Mammary epithelial cell (primary cell): ENCODE measurements at regions of chr9 and their contacts with region 1.

Region 1: DNA sequence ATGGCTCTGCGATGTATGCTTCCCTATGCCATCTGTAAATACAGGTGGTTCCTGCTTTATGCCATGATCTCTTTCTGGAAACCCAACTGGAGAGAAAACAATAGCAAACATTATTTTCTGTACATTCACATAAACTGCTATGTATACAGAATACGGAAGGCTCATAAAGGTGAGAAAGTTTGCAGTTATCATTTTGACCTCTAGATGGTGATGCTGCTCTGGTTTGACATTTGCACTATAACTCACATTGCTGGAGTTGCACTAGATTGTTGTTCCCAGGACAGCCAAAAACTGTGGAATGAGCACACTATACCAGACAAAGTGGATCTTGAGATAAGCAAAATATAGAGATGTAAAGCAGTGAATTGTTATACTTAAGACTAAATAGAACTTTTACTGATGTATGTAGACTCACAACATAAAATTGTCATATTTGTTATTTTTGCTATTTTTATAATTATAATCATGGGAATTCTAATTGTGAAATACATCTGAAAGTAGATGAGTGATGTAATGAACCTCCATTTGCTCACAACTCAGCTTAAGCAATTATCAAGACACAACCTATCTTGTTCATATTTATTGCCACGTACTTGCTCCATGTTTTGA is 246.5 kb downstream of the PTPRD start:
- DNase-seq: peak; percentile 29
- H3K4me3 ChIP-seq: no peak overlapping the region
- H3K27ac ChIP-seq: no peak overlapping the region
- H3K4me1 ChIP-seq: no peaks in the 10 kb centered on the region
- H3K27me3 ChIP-seq: no peaks in the 10 kb centered on the region
- CTCF ChIP-seq: peak; percentile 82 to 84

Region 2: GRCh38 chr9:10045598-10045997 is 320.7 kb before region 1 on chr9:
- CTCF ChIA-PET with region 1: no interaction called
- dilution Hi-C with region 1: no loop called
- in situ Hi-C with region 1: no loop called
- intact Hi-C with region 1: loop called (anchors 5 kb)
- DNase-seq: peak; percentile 26
- H3K4me3 ChIP-seq: no peak overlapping the region
- H3K27ac ChIP-seq: no peak overlapping the region
- H3K4me1 ChIP-seq: peaks cover 2% of the 10 kb centered on the region
- H3K27me3 ChIP-seq: no peaks in the 10 kb centered on the region
- CTCF ChIP-seq: peak; percentile 68 to 69

Region 3: GRCh38 chr9:10331157-10331556 is 35.1 kb before region 1 on chr9:
- CTCF ChIA-PET with region 1: no interaction called
- dilution Hi-C with region 1: no loop called
- in situ Hi-C with region 1: no loop called
- intact Hi-C with region 1: no loop called
- DNase-seq: no peak
- H3K4me3 ChIP-seq: no peak overlapping the region
- H3K27ac ChIP-seq: no peak overlapping the region
- H3K4me1 ChIP-seq: no peaks in the 10 kb centered on the region
- H3K27me3 ChIP-seq: no peaks in the 10 kb centered on the region
- CTCF ChIP-seq: no peak

Region 4: GRCh38 chr9:11319538-11319937 is 953.3 kb after region 1 on chr9:
- CTCF ChIA-PET with region 1: no interaction called
- dilution Hi-C with region 1: no loop called
- in situ Hi-C with region 1: loop called in 1 of 2 experiments (anchors 25 kb)
- intact Hi-C with region 1: loop called (anchors 1 kb)
- DNase-seq: no peak
- H3K4me3 ChIP-seq: no peak overlapping the region
- H3K27ac ChIP-seq: no peak overlapping the region
- H3K4me1 ChIP-seq: no peaks in the 10 kb centered on the region
- H3K27me3 ChIP-seq: no peaks in the 10 kb centered on the region
- CTCF ChIP-seq: peak; percentile 30 to 61

Region 5: GRCh38 chr9:12329623-12329985 is 1963.3 kb after region 1 on chr9:
- CTCF ChIA-PET with region 1: no interaction called
- dilution Hi-C with region 1: no loop called
- in situ Hi-C with region 1: loop called in 1 of 2 experiments (anchors 25 kb)
- intact Hi-C with region 1: loop called (anchors 2 kb)
- DNase-seq: no peak
- H3K4me3 ChIP-seq: no peak overlapping the region
- H3K27ac ChIP-seq: no peak overlapping the region
- H3K4me1 ChIP-seq: no peaks in the 10 kb centered on the region
- H3K27me3 ChIP-seq: no peaks in the 10 kb centered on the region
- CTCF ChIP-seq: no peak